ENCODE measurements at regions of chr11 and their contacts with region 1.

Region 1: GRCh38 chr11:111454561-111455192 is 57.5 kb downstream of the BTG4 start:
- DNase-seq: peak; percentile 76
- ATAC-seq: peak; percentile 82
- H3K4me3 Mint-ChIP-seq: no peak overlapping the region
- H3K27ac Mint-ChIP-seq: no peak overlapping the region
- H3K4me1 Mint-ChIP-seq: peaks cover 5% of the 10 kb centered on the region
- H3K27me3 Mint-ChIP-seq: peaks cover 10% of the 10 kb centered on the region

Region 2: GRCh38 chr11:111435046-111435698 is 19.5 kb before region 1 on chr11:
- CTCF ChIA-PET with region 1: no interaction called
- POLR2A ChIA-PET with region 1: no interaction called
- DNase-seq: no peak
- ATAC-seq: no peak
- H3K4me3 Mint-ChIP-seq: no peak overlapping the region
- H3K27ac Mint-ChIP-seq: no peak overlapping the region
- H3K4me1 Mint-ChIP-seq: peaks cover 15% of the 10 kb centered on the region
- H3K27me3 Mint-ChIP-seq: peaks cover 10% of the 10 kb centered on the region

Region 3: DNA sequence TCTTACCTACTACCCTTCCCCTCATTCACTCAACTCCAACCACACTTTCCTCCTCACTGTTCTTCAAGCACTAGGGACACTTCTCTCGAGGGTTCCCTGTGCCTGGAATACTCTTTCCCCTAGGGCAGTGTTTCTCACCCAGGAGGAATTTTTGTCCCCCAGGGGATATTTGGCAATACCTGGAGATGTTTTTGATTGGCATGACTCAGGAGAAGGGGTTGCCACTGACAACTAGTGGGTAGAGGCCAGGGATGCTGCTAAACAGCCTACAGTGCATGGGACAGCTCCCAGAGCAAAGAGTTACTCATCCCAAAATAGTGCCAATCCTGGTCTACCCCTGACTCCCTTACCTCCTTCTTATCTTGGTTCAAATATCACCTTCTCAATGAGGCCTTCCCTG is 17.6 kb after region 1 on chr11:
- CTCF ChIA-PET with region 1: interaction called, 10 read pairs
- POLR2A ChIA-PET with region 1: no interaction called
- DNase-seq: no peak
- ATAC-seq: no peak
- H3K4me3 Mint-ChIP-seq: no peak overlapping the region
- H3K27ac Mint-ChIP-seq: no peak overlapping the region
- H3K4me1 Mint-ChIP-seq: peaks cover 13% of the 10 kb centered on the region
- H3K27me3 Mint-ChIP-seq: peaks cover 3% of the 10 kb centered on the region

Region 4: DNA sequence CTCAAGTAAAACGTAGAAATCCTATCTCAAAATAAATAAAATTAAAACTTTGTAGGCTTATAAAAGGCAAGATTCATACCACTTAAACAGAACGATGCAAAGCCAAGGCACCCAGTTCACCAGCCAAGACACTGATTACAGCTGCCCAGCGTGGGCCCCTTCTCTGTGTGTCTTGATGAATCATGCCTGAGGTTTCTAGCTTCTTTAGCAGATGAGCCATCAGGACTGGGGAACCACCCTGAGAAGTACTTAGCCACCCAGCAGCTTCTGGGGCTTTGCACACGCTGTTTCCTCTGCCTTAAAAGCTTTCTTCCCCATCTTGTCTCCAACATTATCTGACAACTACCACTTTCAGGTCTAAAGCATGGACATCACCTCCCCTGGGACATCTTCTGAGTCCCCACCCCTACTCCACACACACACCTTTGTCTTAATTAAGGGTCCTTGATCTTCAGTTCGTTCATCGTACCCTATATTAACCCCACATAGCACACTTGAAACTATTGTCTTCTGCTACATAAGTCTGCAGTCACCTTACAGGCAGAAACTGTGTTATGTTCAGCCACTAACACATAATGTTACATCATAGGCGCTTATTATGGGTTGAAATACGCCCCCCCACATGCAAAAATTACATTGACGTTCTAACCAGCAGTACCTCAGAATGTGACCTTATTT is 77.1 kb after region 1 on chr11:
- CTCF ChIA-PET with region 1: interaction called, 10 read pairs
- POLR2A ChIA-PET with region 1: no interaction called
- DNase-seq: peak; percentile 77
- ATAC-seq: peak; percentile 99
- H3K4me3 Mint-ChIP-seq: peak overlapping the region; percentile 35
- H3K27ac Mint-ChIP-seq: peak overlapping the region; percentile 92
- H3K4me1 Mint-ChIP-seq: peaks cover 42% of the 10 kb centered on the region
- H3K27me3 Mint-ChIP-seq: peaks cover 3% of the 10 kb centered on the region

Region 5: GRCh38 chr11:111565114-111565720 is 110.5 kb after region 1 on chr11:
- CTCF ChIA-PET with region 1: interaction called, 34 read pairs
- POLR2A ChIA-PET with region 1: no interaction called
- DNase-seq: peak; percentile 78
- ATAC-seq: peak; percentile 44
- H3K4me3 Mint-ChIP-seq: no peak overlapping the region
- H3K27ac Mint-ChIP-seq: no peak overlapping the region
- H3K4me1 Mint-ChIP-seq: no peaks in the 10 kb centered on the region
- H3K27me3 Mint-ChIP-seq: peaks cover 4% of the 10 kb centered on the region

Region 6: GRCh38 chr11:111659201-111660115 is 204.8 kb after region 1 on chr11:
- CTCF ChIA-PET with region 1: no interaction called
- POLR2A ChIA-PET with region 1: no interaction called
- DNase-seq: no peak
- ATAC-seq: no peak
- H3K4me3 Mint-ChIP-seq: no peak overlapping the region
- H3K27ac Mint-ChIP-seq: no peak overlapping the region
- H3K4me1 Mint-ChIP-seq: no peaks in the 10 kb centered on the region
- H3K27me3 Mint-ChIP-seq: no peaks in the 10 kb centered on the region